ENCODE measurements at regions of chr4 and their contacts with region 1.

Region 1: GRCh38 chr4:184263910-184264732 is 46.4 kb upstream of the ENPP6 start:
- DNase-seq: peak; percentile 84 to 93 (median 90)
- H3K4me3 ChIP-seq: no peak overlapping the region
- H3K4me3 Mint-ChIP-seq: peak overlapping the region in 1 of 7 donors; percentile 5
- H3K27ac ChIP-seq: no peak overlapping the region
- H3K27ac Mint-ChIP-seq: peak overlapping the region in 5 of 8 donors; percentile 2 to 56 (median 17)
- H3K4me1 ChIP-seq: peaks cover 20% of the 10 kb centered on the region
- H3K4me1 Mint-ChIP-seq: peaks cover 27 to 36% (median 30%) of the 10 kb centered on the region in 3 donors
- H3K27me3 ChIP-seq: no peaks in the 10 kb centered on the region
- H3K27me3 Mint-ChIP-seq: peaks cover 0 to under 1% of the 10 kb centered on the region in 2 donors

Region 2: DNA sequence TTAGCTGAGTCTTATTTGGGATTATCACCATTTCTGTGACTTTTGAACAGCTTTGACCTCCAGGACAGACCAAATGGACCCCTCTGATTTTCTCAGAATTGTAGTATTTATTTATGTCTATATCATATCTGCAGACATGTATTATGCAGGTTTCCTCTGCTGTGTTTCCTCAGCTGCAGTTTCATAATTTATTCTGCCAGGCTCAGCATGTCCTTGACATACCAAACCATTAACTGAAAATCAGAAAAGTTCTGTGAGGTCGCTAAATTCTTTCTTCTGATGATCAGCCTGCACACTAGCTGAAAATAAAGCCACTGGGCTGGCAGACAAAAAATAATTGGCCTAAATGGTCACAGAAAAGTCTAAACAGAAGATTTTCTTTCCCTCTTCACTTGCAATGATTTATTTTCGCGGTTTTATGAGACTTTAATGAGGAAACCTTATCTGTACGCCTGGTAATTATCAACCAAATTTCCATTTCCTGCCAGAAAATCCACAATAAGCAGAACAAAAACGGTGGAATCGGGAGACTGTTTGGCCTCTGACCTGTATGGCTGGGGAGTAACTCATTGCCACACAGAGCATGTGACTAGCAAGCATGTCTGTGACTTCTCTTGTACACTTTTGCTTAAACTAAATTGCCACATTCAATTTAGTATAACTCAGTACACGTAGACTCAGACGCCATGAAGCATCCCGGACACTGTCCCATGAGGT is 197.4 kb before region 1 on chr4:
- CTCF ChIA-PET with region 1: no interaction called
- POLR2A ChIA-PET with region 1: no interaction called
- DNase-seq: no peak
- H3K4me3 ChIP-seq: no peak overlapping the region
- H3K4me3 Mint-ChIP-seq: no peak overlapping the region
- H3K27ac ChIP-seq: no peak overlapping the region
- H3K27ac Mint-ChIP-seq: no peak overlapping the region
- H3K4me1 ChIP-seq: no peaks in the 10 kb centered on the region
- H3K4me1 Mint-ChIP-seq: no peaks in the 10 kb centered on the region
- H3K27me3 ChIP-seq: no peaks in the 10 kb centered on the region
- H3K27me3 Mint-ChIP-seq: peaks cover 1 to 28% of the 10 kb centered on the region in 2 donors

Region 3: GRCh38 chr4:184274288-184274951 is 10.3 kb after region 1 on chr4:
- CTCF ChIA-PET with region 1: interaction called, 10 read pairs
- POLR2A ChIA-PET with region 1: no interaction called
- DNase-seq: no peak
- H3K4me3 ChIP-seq: no peak overlapping the region
- H3K4me3 Mint-ChIP-seq: no peak overlapping the region
- H3K27ac ChIP-seq: no peak overlapping the region
- H3K27ac Mint-ChIP-seq: peak overlapping the region in 1 of 8 donors; percentile 18
- H3K4me1 ChIP-seq: no peaks in the 10 kb centered on the region
- H3K4me1 Mint-ChIP-seq: peaks cover 0 to 16% (median 11%) of the 10 kb centered on the region in 3 donors
- H3K27me3 ChIP-seq: no peaks in the 10 kb centered on the region
- H3K27me3 Mint-ChIP-seq: peaks cover 0 to 1% of the 10 kb centered on the region in 2 donors

Region 4: DNA sequence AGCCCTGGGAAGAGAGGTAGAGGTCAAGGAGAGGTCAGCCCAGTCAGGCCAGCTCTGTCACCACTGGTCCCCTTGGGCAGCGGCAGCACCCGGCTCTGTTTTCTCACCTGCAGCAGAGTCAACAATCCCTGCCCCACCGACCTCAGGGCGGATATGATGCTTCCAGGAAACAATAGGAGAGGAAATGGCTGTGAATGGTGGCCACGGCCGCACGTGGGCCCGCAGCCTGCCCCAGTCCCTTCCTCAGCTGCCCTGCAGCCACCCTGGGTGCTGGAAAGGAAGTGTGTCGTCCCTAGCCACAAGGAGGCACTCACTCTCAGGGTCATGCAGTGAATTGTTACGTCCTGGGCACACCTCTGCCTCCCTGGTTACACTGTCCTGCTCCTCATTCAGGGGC is 46.0 kb after region 1 on chr4:
- CTCF ChIA-PET with region 1: interaction called, 15 read pairs
- POLR2A ChIA-PET with region 1: no interaction called
- DNase-seq: peak in 3 of 5 donors; percentile 14 to 63 (median 36)
- H3K4me3 ChIP-seq: no peak overlapping the region
- H3K4me3 Mint-ChIP-seq: peak overlapping the region in 1 of 7 donors; percentile 9
- H3K27ac ChIP-seq: no peak overlapping the region
- H3K27ac Mint-ChIP-seq: peak overlapping the region in 7 of 8 donors; percentile 5 to 86 (median 75)
- H3K4me1 ChIP-seq: peaks cover 15% of the 10 kb centered on the region
- H3K4me1 Mint-ChIP-seq: peaks cover 18 to 27% (median 20%) of the 10 kb centered on the region in 3 donors
- H3K27me3 ChIP-seq: no peaks in the 10 kb centered on the region
- H3K27me3 Mint-ChIP-seq: no peaks in the 10 kb centered on the region

Region 5: DNA sequence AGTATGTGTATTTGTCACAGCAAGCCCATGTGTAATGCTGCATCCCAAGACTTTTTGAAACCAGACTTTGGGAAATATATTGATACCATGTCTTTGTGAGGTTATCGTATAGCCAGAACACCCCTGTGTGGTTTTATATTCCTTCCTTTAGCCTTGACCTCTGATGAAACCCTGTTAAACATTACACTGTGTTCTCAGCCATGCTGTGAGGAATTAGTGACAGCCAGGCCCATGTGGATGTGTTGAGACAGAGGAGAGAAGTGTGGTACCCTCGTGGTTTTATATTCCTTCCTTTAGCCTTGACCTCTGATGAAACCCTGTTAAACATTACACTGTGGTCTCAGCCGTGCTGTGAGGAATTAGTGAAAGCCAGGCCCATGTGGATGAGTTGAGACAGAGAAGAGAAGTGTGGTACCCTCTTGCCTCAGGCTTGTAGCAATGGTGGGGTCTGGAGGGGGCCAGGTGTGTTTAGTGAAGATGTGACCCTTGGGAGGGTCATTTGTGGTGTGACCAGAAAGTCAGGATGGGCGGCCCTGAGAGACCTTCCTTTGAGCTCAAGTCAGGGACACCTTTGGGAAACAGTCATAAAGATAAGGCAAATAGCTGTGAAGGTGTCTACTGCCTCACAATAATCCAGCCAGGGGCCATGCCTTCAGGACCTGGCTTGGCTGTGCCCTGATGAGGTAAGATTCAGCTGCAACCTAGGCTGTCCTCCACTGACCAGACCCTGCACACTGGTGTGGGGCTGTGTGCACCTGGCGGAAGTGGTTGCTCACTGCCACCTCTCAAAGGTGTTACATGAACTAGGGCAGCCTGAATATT is 100.2 kb after region 1 on chr4:
- CTCF ChIA-PET with region 1: no interaction called
- POLR2A ChIA-PET with region 1: no interaction called
- DNase-seq: no peak
- H3K4me3 ChIP-seq: no peak overlapping the region
- H3K4me3 Mint-ChIP-seq: no peak overlapping the region
- H3K27ac ChIP-seq: no peak overlapping the region
- H3K27ac Mint-ChIP-seq: peak overlapping the region in 4 of 8 donors; percentile 10 to 71 (median 37)
- H3K4me1 ChIP-seq: no peaks in the 10 kb centered on the region
- H3K4me1 Mint-ChIP-seq: peaks cover 8 to 11% (median 10%) of the 10 kb centered on the region in 3 donors
- H3K27me3 ChIP-seq: no peaks in the 10 kb centered on the region
- H3K27me3 Mint-ChIP-seq: peaks cover 0 to 3% of the 10 kb centered on the region in 2 donors

Region 6: DNA sequence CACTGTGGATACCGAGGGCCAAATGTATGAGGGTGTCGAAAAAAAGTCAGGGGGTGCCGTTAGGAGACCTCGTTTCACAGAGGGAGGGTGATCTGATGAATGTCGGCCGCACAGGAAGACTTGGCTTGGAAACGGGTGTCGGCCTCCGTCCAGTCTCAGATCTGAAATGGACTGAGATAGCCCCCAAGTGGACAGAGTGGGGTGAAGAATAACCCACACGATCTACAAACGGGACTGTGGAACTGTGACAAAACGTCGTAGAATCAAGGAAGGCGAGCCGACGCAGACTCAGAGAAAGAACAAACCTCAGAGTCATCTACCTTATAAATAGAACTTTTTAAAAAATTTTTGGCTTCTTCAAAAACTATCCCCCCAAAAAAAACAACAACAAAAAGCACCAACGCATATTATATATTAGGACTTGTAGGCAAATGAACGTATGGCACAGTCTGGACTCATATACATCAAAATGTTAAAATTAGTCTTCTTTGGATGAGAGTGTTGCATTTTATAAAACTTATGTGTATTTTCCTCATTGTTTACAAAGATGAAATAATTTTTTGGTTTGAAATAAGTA is 274.0 kb after region 1 on chr4:
- CTCF ChIA-PET with region 1: interaction called, 30 read pairs
- POLR2A ChIA-PET with region 1: interaction called, 4 read pairs
- DNase-seq: peak; percentile 20 to 75 (median 63)
- H3K4me3 ChIP-seq: peak overlapping the region; percentile 89
- H3K4me3 Mint-ChIP-seq: peak overlapping the region; percentile 90 to 97 (median 94)
- H3K27ac ChIP-seq: peak overlapping the region; percentile 88
- H3K27ac Mint-ChIP-seq: peak overlapping the region; percentile 97 to 100 (median 99)
- H3K4me1 ChIP-seq: peaks cover 33% of the 10 kb centered on the region
- H3K4me1 Mint-ChIP-seq: peaks cover 40 to 51% (median 41%) of the 10 kb centered on the region in 3 donors
- H3K27me3 ChIP-seq: no peaks in the 10 kb centered on the region
- H3K27me3 Mint-ChIP-seq: no peaks in the 10 kb centered on the region

Region 7: DNA sequence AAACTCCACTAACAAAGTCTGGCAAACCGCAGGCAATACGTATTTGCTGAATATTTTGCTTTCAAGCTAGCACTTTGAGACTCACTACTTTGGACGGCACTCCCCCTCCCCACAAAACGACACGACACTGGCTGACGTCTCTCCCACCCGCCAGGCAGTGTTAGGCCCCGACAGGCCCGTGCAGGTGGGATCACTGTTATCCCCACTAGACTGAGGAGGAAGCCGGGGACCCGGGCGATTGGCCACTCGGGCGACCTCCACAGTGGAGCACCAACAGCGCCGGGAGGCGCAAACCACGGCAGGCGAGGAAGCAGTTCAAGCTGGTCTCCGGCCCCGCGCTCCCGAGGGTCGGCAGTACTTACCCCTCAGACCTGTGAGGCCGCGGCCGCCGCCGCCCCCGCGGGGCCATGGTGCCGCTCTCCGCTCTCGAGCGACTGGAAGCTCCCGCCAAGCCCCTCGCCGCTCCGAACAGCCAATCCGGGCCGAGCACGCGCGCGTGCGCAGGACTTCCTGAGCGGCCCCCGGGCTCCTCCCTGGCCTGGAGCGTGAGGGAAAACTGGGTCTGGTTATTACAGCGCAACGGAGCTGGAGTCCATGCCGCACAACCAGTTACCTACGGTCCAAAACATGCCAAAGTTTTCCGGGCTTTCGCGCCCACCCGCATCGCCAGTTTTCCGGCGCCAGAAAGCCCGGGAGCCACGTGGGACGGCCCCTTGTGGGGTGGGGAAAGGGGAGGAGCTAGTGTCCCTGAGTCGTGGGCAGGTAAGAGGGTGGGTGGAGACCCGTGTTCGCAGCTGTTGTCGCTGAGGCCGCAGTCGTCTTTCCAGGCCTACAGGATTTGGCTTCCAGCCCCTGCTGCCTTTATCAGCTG is 469.8 kb after region 1 on chr4 and contains the start of gene CENPU:
- CTCF ChIA-PET with region 1: interaction called, 12 read pairs
- POLR2A ChIA-PET with region 1: no interaction called
- DNase-seq: peak; percentile 89 to 96 (median 93)
- H3K4me3 ChIP-seq: peak within 1 kb of the TSS; percentile 73
- H3K4me3 Mint-ChIP-seq: peak within 1 kb of the TSS; percentile 86 to 94 (median 92)
- H3K27ac ChIP-seq: peak within 1 kb of the TSS; percentile 72
- H3K27ac Mint-ChIP-seq: peak within 1 kb of the TSS; percentile 29 to 93 (median 85)
- H3K4me1 ChIP-seq: peaks cover 6% of the 10 kb centered on the region
- H3K4me1 Mint-ChIP-seq: peaks cover 17 to 29% (median 22%) of the 10 kb centered on the region in 3 donors
- H3K27me3 ChIP-seq: no peaks in the 10 kb centered on the region
- H3K27me3 Mint-ChIP-seq: peaks cover 0 to 2% of the 10 kb centered on the region in 2 donors
- total RNA-seq, gene CENPU: 54.5 to 56.9 TPM